CD8-positive, alpha-beta T cell (primary cell): ENCODE measurements at regions of chr12 and their contacts with region 1.

Region 1: DNA sequence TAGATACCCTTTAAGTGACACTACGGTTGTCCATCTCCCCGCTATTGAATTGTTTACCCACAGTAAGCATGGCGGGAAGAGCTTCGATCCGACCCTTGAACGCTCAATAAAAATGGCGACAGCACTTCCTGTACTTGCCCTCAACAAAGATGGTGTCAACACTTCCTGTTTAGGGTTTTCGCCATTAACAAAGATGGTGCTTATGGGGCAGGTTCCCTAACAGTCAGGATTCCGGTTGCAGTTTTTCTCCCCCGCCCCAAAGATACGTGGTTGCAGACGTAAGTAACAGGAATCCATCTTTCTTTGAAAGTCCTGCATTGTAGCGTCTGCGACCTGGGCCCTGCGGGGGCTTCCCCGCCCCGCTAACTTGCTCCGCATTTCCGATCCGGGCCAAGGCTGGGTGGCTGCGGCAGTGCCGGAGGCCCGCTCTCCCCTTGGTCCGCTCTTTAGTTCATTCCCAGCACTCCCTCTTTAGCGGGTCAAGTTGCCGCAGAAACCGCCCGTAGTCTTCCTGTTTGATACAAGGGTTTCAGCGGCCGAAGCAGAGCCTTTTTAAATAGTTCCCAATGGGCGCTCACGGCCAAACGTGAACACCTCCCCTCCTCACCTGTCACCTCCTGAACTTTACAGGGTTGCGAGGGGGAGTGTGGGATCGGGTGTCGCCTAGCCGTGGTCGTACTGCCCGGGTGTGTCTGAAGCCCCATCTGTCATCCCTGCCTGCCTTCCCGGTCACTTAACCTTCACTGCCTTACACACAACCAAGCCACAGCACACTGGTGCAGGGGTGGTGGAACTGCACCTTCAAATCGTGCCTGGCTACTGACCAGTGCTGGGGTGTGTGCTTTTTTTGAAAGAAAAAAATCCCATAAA is at the start of gene CRADD:
- DNase-seq: peak; percentile 65 to 99 (median 83)
- ATAC-seq: peak; percentile 95
- H3K4me3 ChIP-seq: peak within 1 kb of the TSS; percentile 67 to 83
- H3K4me3 Mint-ChIP-seq: peak within 1 kb of the TSS; percentile 98
- H3K27ac ChIP-seq: peak within 1 kb of the TSS; percentile 95 to 97
- H3K27ac Mint-ChIP-seq: peak within 1 kb of the TSS; percentile 100
- H3K4me1 ChIP-seq: peaks cover 8% of the 10 kb centered on the region
- H3K4me1 Mint-ChIP-seq: peaks cover 41% of the 10 kb centered on the region
- H3K27me3 ChIP-seq: no peaks in the 10 kb centered on the region
- H3K27me3 Mint-ChIP-seq: peaks cover 13% of the 10 kb centered on the region
- CTCF ChIP-seq: no peak
- total RNA-seq, gene CRADD: 5.3 to 5.7 TPM

Region 2: GRCh38 chr12:93378373-93379325 is 298.8 kb before region 1 on chr12:
- CTCF ChIA-PET with region 1: no interaction called
- POLR2A ChIA-PET with region 1: no interaction called
- intact Hi-C with region 1: loop called (anchors 1 to 2 kb)
- DNase-seq: peak; percentile 18 to 85 (median 57)
- ATAC-seq: peak; percentile 54
- H3K4me3 ChIP-seq: peak overlapping the region; percentile 72 to 87
- H3K4me3 Mint-ChIP-seq: peak overlapping the region; percentile 99
- H3K27ac ChIP-seq: peak overlapping the region; percentile 77 to 81
- H3K27ac Mint-ChIP-seq: peak overlapping the region; percentile 99
- H3K4me1 ChIP-seq: peaks cover 23% of the 10 kb centered on the region
- H3K4me1 Mint-ChIP-seq: peaks cover 44% of the 10 kb centered on the region
- H3K27me3 ChIP-seq: no peaks in the 10 kb centered on the region
- H3K27me3 Mint-ChIP-seq: no peaks in the 10 kb centered on the region
- CTCF ChIP-seq: no peak

Region 3: GRCh38 chr12:93569656-93570551 is 107.5 kb before region 1 on chr12:
- CTCF ChIA-PET with region 1: interaction called, 3 read pairs
- POLR2A ChIA-PET with region 1: interaction called, 14 read pairs
- intact Hi-C with region 1: loop called (anchors 1 kb)
- DNase-seq: peak; percentile 39 to 86 (median 73)
- ATAC-seq: peak; percentile 47
- H3K4me3 ChIP-seq: peak overlapping the region; percentile 94 to 96
- H3K4me3 Mint-ChIP-seq: peak overlapping the region; percentile 93
- H3K27ac ChIP-seq: peak overlapping the region; percentile 72 to 79
- H3K27ac Mint-ChIP-seq: peak overlapping the region; percentile 90
- H3K4me1 ChIP-seq: peaks cover 17% of the 10 kb centered on the region
- H3K4me1 Mint-ChIP-seq: peaks cover 28% of the 10 kb centered on the region
- H3K27me3 ChIP-seq: no peaks in the 10 kb centered on the region
- H3K27me3 Mint-ChIP-seq: peaks cover 2% of the 10 kb centered on the region
- CTCF ChIP-seq: peak; percentile 64

Region 4: GRCh38 chr12:93616584-93617101 is 60.8 kb before region 1 on chr12:
- CTCF ChIA-PET with region 1: no interaction called
- POLR2A ChIA-PET with region 1: no interaction called
- intact Hi-C with region 1: no loop called
- DNase-seq: no peak
- ATAC-seq: no peak
- H3K4me3 ChIP-seq: no peak overlapping the region
- H3K4me3 Mint-ChIP-seq: no peak overlapping the region
- H3K27ac ChIP-seq: no peak overlapping the region
- H3K27ac Mint-ChIP-seq: no peak overlapping the region
- H3K4me1 ChIP-seq: no peaks in the 10 kb centered on the region
- H3K4me1 Mint-ChIP-seq: no peaks in the 10 kb centered on the region
- H3K27me3 ChIP-seq: no peaks in the 10 kb centered on the region
- H3K27me3 Mint-ChIP-seq: no peaks in the 10 kb centered on the region
- CTCF ChIP-seq: no peak

Region 5: DNA sequence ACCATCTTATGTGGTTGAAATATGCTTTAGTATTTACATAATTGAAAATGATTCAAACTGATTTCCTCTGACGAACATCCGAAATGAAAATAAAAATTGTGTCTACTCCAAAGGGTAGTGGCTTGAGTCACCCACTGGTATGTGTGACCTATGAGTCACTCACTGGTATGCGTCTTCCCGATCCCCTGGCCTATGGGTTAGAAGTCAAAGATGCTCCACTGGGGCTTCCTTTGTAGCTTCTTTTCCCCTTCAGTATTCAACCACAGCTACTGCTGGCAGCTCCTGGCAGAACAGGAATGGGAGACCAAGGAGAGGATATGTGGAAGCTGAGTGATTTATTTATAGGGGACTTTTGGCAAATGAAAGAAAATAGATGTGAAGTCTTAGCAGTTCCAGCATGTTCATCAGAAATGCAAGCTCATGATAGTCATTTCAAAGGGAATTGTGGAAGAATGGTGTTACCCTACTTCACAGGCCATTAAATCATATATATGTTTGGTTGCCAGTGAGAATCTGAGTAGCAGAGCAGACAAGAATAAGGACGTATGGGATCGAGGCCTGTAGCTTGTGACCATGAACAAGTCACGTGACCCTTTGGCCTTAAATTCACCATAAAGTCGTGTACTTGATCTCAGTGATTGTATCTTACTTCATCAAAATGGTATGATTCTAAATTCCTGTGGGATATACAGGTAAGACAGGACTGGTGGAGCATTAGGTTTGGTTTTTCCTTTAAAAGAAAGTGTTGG is 108.0 kb after region 1 on chr12:
- CTCF ChIA-PET with region 1: no interaction called
- POLR2A ChIA-PET with region 1: no interaction called
- intact Hi-C with region 1: loop called (anchors 5 kb)
- DNase-seq: peak in 6 of 9 experiments; percentile 12 to 61 (median 48)
- ATAC-seq: peak; percentile 52
- H3K4me3 ChIP-seq: no peak overlapping the region
- H3K4me3 Mint-ChIP-seq: no peak overlapping the region
- H3K27ac ChIP-seq: no peak overlapping the region
- H3K27ac Mint-ChIP-seq: peak overlapping the region; percentile 42
- H3K4me1 ChIP-seq: peaks cover 33% of the 10 kb centered on the region
- H3K4me1 Mint-ChIP-seq: peaks cover 57% of the 10 kb centered on the region
- H3K27me3 ChIP-seq: no peaks in the 10 kb centered on the region
- H3K27me3 Mint-ChIP-seq: no peaks in the 10 kb centered on the region
- CTCF ChIP-seq: no peak

Region 6: GRCh38 chr12:94262228-94263010 is 585.0 kb after region 1 on chr12:
- CTCF ChIA-PET with region 1: no interaction called
- POLR2A ChIA-PET with region 1: no interaction called
- intact Hi-C with region 1: loop called in 1 of 2 experiments (anchors 5 kb)
- DNase-seq: peak; percentile 45 to 90 (median 79)
- ATAC-seq: peak; percentile 91
- H3K4me3 ChIP-seq: peak overlapping the region; percentile 63 to 68
- H3K4me3 Mint-ChIP-seq: peak overlapping the region; percentile 99
- H3K27ac ChIP-seq: peak overlapping the region; percentile 74 to 92
- H3K27ac Mint-ChIP-seq: peak overlapping the region; percentile 99
- H3K4me1 ChIP-seq: peaks cover 21% of the 10 kb centered on the region
- H3K4me1 Mint-ChIP-seq: peaks cover 44% of the 10 kb centered on the region
- H3K27me3 ChIP-seq: no peaks in the 10 kb centered on the region
- H3K27me3 Mint-ChIP-seq: no peaks in the 10 kb centered on the region
- CTCF ChIP-seq: no peak

Region 7: GRCh38 chr12:95217377-95218149 is 1540.1 kb after region 1 on chr12 and contains the starts of genes FGD6 and VEZT:
- CTCF ChIA-PET with region 1: no interaction called
- POLR2A ChIA-PET with region 1: no interaction called
- intact Hi-C with region 1: loop called (anchors 2 to 10 kb)
- DNase-seq: peak; percentile 93 to 99 (median 98)
- ATAC-seq: peak; percentile 91
- H3K4me3 ChIP-seq: peak within 1 kb of the TSS; percentile 96
- H3K4me3 Mint-ChIP-seq: peak within 1 kb of the TSS; percentile 96
- H3K27ac ChIP-seq: peak within 1 kb of the TSS; percentile 90 to 95
- H3K27ac Mint-ChIP-seq: peak within 1 kb of the TSS; percentile 97
- H3K4me1 ChIP-seq: peaks cover 17% of the 10 kb centered on the region
- H3K4me1 Mint-ChIP-seq: peaks cover 37% of the 10 kb centered on the region
- H3K27me3 ChIP-seq: no peaks in the 10 kb centered on the region
- H3K27me3 Mint-ChIP-seq: peaks cover 5% of the 10 kb centered on the region
- CTCF ChIP-seq: peak; percentile 41
- total RNA-seq, gene FGD6: 0.94 to 1.6 TPM
- total RNA-seq, gene VEZT: 48.4 to 57.7 TPM

Region 8: GRCh38 chr12:95548539-95549391 is 1871.3 kb after region 1 on chr12:
- CTCF ChIA-PET with region 1: no interaction called
- POLR2A ChIA-PET with region 1: no interaction called
- intact Hi-C with region 1: loop called in 1 of 2 experiments (anchors 5 kb)
- DNase-seq: peak; percentile 47 to 88 (median 71)
- ATAC-seq: peak; percentile 73
- H3K4me3 ChIP-seq: peak overlapping the region; percentile 65 to 81
- H3K4me3 Mint-ChIP-seq: peak overlapping the region; percentile 95
- H3K27ac ChIP-seq: peak overlapping the region; percentile 77 to 86
- H3K27ac Mint-ChIP-seq: peak overlapping the region; percentile 96
- H3K4me1 ChIP-seq: peaks cover 25% of the 10 kb centered on the region
- H3K4me1 Mint-ChIP-seq: peaks cover 57% of the 10 kb centered on the region
- H3K27me3 ChIP-seq: peaks cover 0 to 2% of the 10 kb centered on the region in 2 experiments
- H3K27me3 Mint-ChIP-seq: no peaks in the 10 kb centered on the region
- CTCF ChIP-seq: no peak